Astrocyte of the cerebellum (primary cell): ENCODE measurements at regions of chr16 and their contacts with region 1.

Region 1: GRCh38 chr16:79456036-79456435 is 144.5 kb downstream of the MAF start:
- DNase-seq: no peak
- H3K4me3 ChIP-seq: no peak overlapping the region
- CTCF ChIP-seq: no peak

Region 2: DNA sequence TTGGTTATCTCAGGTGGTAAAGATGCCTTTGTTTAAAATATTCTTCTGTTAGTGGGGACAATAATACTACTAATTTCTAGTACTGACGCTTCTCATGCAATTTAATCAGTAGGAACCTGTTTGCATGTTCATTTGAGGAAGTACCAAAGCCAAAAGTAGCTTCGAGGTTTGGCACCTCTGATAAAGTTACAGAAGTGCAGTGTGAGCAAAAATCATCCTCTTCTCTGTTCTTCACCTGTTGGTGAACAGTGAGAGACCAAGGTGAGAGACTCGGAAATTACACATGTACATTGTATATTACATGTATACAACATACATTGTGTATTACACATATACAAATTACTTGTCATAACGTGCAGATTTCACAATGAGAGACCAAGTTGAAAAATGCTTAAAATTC is 260.1 kb before region 1 on chr16:
- in situ Hi-C with region 1: no loop called
- DNase-seq: no peak
- H3K4me3 ChIP-seq: no peak overlapping the region
- CTCF ChIP-seq: no peak

Region 3: GRCh38 chr16:79510879-79511278 is 54.8 kb after region 1 on chr16:
- in situ Hi-C with region 1: loop called (anchors 5 kb)
- DNase-seq: no peak
- H3K4me3 ChIP-seq: no peak overlapping the region
- CTCF ChIP-seq: no peak

Region 4: GRCh38 chr16:79528338-79528737 is 72.3 kb after region 1 on chr16:
- in situ Hi-C with region 1: no loop called
- DNase-seq: no peak
- H3K4me3 ChIP-seq: no peak overlapping the region
- CTCF ChIP-seq: no peak